ENCODE measurements at regions of chr4 and their contacts with region 1.

Region 1: GRCh38 chr4:80202190-80202711 is 4.9 kb downstream of the PRDM8 start:
- DNase-seq: peak; percentile 68
- H3K4me3 ChIP-seq: peak overlapping the region; percentile 52 to 69 (median 59)
- H3K27ac ChIP-seq: peak overlapping the region; percentile 36
- H3K4me1 ChIP-seq: peaks cover 30% of the 10 kb centered on the region
- H3K27me3 ChIP-seq: no peaks in the 10 kb centered on the region
- CTCF ChIP-seq: peak; percentile 42 to 72

Region 2: GRCh38 chr4:78951862-78952472 is 1250.3 kb before region 1 on chr4:
- CTCF ChIA-PET with region 1: no interaction called
- dilution Hi-C with region 1: no loop called
- in situ Hi-C with region 1: loop called (anchors 25 kb)
- intact Hi-C with region 1: no loop called
- DNase-seq: peak; percentile 23
- H3K4me3 ChIP-seq: no peak overlapping the region
- H3K27ac ChIP-seq: no peak overlapping the region
- H3K4me1 ChIP-seq: no peaks in the 10 kb centered on the region
- H3K27me3 ChIP-seq: no peaks in the 10 kb centered on the region
- CTCF ChIP-seq: peak; percentile 61 to 71

Region 3: GRCh38 chr4:80026100-80026499 is 176.2 kb before region 1 on chr4:
- CTCF ChIA-PET with region 1: no interaction called
- dilution Hi-C with region 1: no loop called
- in situ Hi-C with region 1: no loop called
- intact Hi-C with region 1: no loop called
- DNase-seq: no peak
- H3K4me3 ChIP-seq: no peak overlapping the region
- H3K27ac ChIP-seq: no peak overlapping the region
- H3K4me1 ChIP-seq: peaks cover 14% of the 10 kb centered on the region
- H3K27me3 ChIP-seq: no peaks in the 10 kb centered on the region
- CTCF ChIP-seq: no peak

Region 4: GRCh38 chr4:80072744-80073472 is 129.3 kb before region 1 on chr4 and contains the start of gene ANTXR2:
- CTCF ChIA-PET with region 1: no interaction called
- dilution Hi-C with region 1: no loop called
- in situ Hi-C with region 1: no loop called
- intact Hi-C with region 1: loop called (anchors 5 kb)
- DNase-seq: peak; percentile 92
- H3K4me3 ChIP-seq: peak within 1 kb of the TSS; percentile 71 to 96 (median 81)
- H3K27ac ChIP-seq: peak within 1 kb of the TSS; percentile 56
- H3K4me1 ChIP-seq: peaks cover 43% of the 10 kb centered on the region
- H3K27me3 ChIP-seq: no peaks in the 10 kb centered on the region
- CTCF ChIP-seq: peak in 1 of 2 donors; percentile 16
- total RNA-seq, gene ANTXR2: 28.3 to 116 TPM

Region 5: GRCh38 chr4:80173401-80173800 is 28.9 kb before region 1 on chr4:
- CTCF ChIA-PET with region 1: interaction called, 23 read pairs
- dilution Hi-C with region 1: no loop called
- in situ Hi-C with region 1: no loop called
- intact Hi-C with region 1: no loop called
- DNase-seq: peak; percentile 87
- H3K4me3 ChIP-seq: no peak overlapping the region
- H3K27ac ChIP-seq: no peak overlapping the region
- H3K4me1 ChIP-seq: peaks cover 21% of the 10 kb centered on the region
- H3K27me3 ChIP-seq: no peaks in the 10 kb centered on the region
- CTCF ChIP-seq: no peak

Region 6: DNA sequence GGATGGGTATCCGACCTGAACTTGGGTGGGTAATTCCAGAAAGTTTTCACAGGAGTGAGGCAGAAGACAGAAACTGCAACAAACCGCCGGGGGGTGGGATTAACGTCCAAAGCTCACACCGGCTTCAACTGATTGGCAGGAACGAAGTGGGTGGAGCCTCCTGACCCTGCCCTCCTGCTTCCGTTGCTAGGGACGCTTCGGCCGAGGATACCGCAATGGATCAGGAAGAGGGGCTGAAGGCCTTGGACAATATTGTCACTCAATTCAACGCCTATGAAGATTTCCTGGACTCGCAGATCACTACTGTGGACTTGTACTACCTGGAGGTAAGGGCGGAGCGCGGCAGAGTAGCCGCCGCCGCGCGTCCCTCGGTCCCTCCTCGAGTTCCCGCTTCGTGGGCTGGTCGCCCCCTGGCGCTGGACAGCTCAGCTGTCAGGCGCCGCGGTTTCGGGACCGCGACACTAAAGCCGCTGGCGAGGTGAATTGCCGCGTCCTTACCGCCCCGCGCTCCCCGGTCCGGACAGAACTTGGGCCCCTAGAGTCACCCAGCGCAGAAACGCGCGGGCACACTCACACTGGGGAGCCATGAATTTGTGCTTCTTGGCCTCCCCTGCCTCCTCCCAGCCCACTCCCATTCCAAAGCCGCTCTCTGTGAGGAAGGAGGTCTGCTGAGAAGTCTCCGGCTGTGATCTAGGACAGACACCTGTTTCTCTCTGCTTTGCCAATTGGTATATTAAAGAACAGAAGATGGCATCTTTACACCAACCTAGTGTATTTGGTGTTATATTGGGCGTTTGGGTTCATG is 133.5 kb after region 1 on chr4 and contains the start of gene CFAP299:
- CTCF ChIA-PET with region 1: no interaction called
- dilution Hi-C with region 1: loop called (anchors 25 kb)
- in situ Hi-C with region 1: no loop called
- intact Hi-C with region 1: no loop called
- DNase-seq: peak; percentile 90
- H3K4me3 ChIP-seq: peak within 1 kb of the TSS; percentile 61 to 78 (median 72)
- H3K27ac ChIP-seq: peak within 1 kb of the TSS; percentile 29
- H3K4me1 ChIP-seq: peaks cover 11% of the 10 kb centered on the region
- H3K27me3 ChIP-seq: no peaks in the 10 kb centered on the region
- CTCF ChIP-seq: peak; percentile 3 to 50
- total RNA-seq, gene CFAP299: not detected

Measured in mammary epithelial cell (primary cell).